ENCODE measurements at regions of chr3 and their contacts with region 1.

Region 1: GRCh38 chr3:129120254-129121004 is 1.2 kb downstream of the RAB43 start:
- DNase-seq: peak; percentile 96
- ATAC-seq: peak; percentile 69
- H3K4me3 Mint-ChIP-seq: peak overlapping the region; percentile 91
- H3K27ac Mint-ChIP-seq: peak overlapping the region; percentile 95
- H3K4me1 Mint-ChIP-seq: peaks cover 46% of the 10 kb centered on the region
- H3K27me3 Mint-ChIP-seq: no peaks in the 10 kb centered on the region

Region 2: DNA sequence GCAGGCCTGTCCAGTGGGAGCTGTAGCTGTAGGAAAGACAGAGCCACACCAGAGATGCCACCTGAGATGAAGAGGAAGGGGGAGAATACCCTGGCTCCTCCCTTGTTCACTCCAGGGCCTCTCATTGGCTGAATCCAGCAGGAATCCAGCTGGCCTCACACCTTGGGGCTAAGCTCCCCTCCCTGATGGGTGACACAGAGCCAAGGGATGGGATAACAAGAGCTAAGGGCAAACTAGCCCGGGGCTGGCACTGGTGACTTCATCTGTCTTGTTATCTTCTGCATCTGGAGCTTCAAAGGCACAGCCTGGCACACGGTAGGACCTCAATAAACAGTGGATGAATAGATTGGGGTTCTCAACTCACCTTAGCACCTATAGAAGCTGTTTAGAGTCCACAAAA is 613.7 kb before region 1 on chr3:
- CTCF ChIA-PET with region 1: no interaction called
- POLR2A ChIA-PET with region 1: no interaction called
- intact Hi-C with region 1: no loop called
- DNase-seq: no peak
- ATAC-seq: no peak
- H3K4me3 Mint-ChIP-seq: no peak overlapping the region
- H3K27ac Mint-ChIP-seq: no peak overlapping the region
- H3K4me1 Mint-ChIP-seq: no peaks in the 10 kb centered on the region
- H3K27me3 Mint-ChIP-seq: peaks cover 18% of the 10 kb centered on the region

Region 3: GRCh38 chr3:128794770-128795649 is 325.4 kb before region 1 on chr3:
- CTCF ChIA-PET with region 1: no interaction called
- POLR2A ChIA-PET with region 1: no interaction called
- intact Hi-C with region 1: loop called in 1 of 2 experiments (anchors 5 kb)
- DNase-seq: peak; percentile 76
- ATAC-seq: peak; percentile 68
- H3K4me3 Mint-ChIP-seq: peak overlapping the region; percentile 37
- H3K27ac Mint-ChIP-seq: peak overlapping the region; percentile 95
- H3K4me1 Mint-ChIP-seq: peaks cover 91% of the 10 kb centered on the region
- H3K27me3 Mint-ChIP-seq: no peaks in the 10 kb centered on the region

Region 4: DNA sequence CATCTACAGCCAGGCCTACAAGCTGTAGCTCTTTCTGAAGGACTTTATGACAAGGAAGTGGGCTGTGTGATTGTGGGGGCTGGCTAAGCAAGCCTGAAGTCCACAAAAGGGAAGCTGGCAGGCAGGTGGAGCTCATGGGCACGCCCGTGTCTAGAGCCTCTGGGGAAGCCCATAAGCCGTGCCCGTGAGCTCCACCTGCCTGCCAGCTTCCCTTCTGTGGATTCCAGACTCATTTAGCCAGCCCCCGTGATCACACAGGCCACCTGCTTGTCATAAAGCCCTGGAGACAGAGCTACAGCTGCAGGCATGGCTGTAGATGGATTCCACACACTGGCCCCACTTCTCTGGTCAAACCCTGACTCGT is 104.1 kb before region 1 on chr3:
- CTCF ChIA-PET with region 1: no interaction called
- POLR2A ChIA-PET with region 1: no interaction called
- intact Hi-C with region 1: no loop called
- DNase-seq: peak; percentile 80
- ATAC-seq: peak; percentile 84
- H3K4me3 Mint-ChIP-seq: peak overlapping the region; percentile 63
- H3K27ac Mint-ChIP-seq: peak overlapping the region; percentile 96
- H3K4me1 Mint-ChIP-seq: peaks cover 36% of the 10 kb centered on the region
- H3K27me3 Mint-ChIP-seq: no peaks in the 10 kb centered on the region

Region 5: GRCh38 chr3:129026728-129027543 is 93.5 kb before region 1 on chr3:
- CTCF ChIA-PET with region 1: interaction called, 5 read pairs
- POLR2A ChIA-PET with region 1: interaction called, 4 read pairs
- intact Hi-C with region 1: loop called in 1 of 2 experiments (anchors 1 kb)
- DNase-seq: peak; percentile 96
- ATAC-seq: peak; percentile 100
- H3K4me3 Mint-ChIP-seq: peak overlapping the region; percentile 72
- H3K27ac Mint-ChIP-seq: peak overlapping the region; percentile 81
- H3K4me1 Mint-ChIP-seq: peaks cover 12% of the 10 kb centered on the region
- H3K27me3 Mint-ChIP-seq: no peaks in the 10 kb centered on the region

Region 6: DNA sequence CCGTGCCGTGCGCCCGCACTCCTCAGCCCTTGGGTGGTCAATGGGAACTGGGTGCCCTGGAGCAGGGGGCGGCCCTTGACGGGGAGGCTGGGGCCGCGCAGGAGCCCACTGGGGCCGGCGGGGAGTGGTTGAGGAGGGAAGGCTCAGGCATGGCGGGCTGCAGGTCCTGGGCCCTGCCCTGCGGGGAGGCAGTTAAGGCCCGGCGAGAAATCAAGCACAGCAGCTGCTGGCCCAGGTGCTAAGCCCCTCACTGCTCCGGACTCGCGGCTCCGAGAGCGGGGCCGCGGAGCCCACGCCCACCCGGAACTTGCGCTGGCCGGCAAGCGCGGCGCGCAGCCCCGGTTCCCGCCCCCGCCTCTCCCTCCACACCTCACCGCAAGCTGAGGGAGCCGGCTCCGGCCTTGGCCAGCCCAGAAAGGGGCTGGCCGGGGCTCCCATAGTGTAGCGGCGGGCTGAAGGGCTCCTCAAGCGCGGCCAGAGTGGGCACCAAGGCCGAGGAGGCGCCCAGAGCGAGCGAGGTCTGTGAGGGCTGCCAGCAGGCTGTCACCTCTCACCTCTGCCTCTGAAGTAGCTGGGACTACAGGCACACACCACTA is 52.0 kb before region 1 on chr3:
- CTCF ChIA-PET with region 1: interaction called, 8 read pairs
- POLR2A ChIA-PET with region 1: interaction called, 3 read pairs
- intact Hi-C with region 1: loop called in 1 of 2 experiments (anchors 5 kb)
- DNase-seq: peak; percentile 31
- ATAC-seq: peak; percentile 47
- H3K4me3 Mint-ChIP-seq: peak overlapping the region; percentile 38
- H3K27ac Mint-ChIP-seq: no peak overlapping the region
- H3K4me1 Mint-ChIP-seq: peaks cover 9% of the 10 kb centered on the region
- H3K27me3 Mint-ChIP-seq: peaks cover 2% of the 10 kb centered on the region

Region 7: DNA sequence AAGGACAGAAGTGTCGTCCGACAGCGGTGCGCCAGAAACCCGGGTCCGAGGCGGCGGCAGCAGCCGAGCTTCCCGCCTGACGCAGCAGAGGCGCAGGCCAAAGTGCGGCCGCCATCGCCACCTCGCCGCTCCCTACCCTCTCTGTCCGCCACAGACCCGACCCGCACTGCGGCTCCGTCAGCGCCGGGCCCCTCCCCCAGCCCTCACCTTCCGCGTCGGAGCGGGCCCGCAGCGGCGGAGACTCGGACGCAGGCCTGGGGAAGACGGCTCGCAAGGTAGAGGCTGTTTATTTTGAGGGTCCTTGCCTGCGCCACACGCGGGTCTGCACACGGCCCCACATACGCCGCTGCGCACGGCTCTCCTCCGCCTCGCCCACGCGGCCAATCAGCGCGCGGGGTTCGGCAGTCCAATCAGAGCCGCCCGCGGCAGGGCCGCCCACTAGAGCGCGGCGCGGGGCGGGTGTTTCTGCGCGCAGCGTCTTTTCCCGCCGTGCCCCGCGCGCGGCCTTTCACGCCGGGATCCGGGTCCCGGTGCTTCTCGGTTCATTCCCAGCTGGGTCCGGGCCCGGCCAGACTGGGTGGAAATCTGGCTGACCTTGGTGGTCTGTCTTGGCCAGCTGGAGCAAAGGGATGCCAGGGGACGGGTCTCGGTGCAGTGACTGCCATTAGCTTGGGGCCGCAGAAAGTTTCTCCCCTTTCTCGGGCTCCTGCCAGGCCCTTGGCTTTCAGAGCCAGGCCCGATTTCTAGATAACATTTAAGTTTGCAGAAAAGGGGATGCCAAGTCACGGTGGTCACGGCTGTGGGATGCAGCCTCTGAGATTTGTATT is 63.4 kb after region 1 on chr3 and contains the start of gene CNBP:
- CTCF ChIA-PET with region 1: no interaction called
- POLR2A ChIA-PET with region 1: interaction called, 4 read pairs
- intact Hi-C with region 1: loop called (anchors 1 kb)
- DNase-seq: peak; percentile 96
- ATAC-seq: peak; percentile 95
- H3K4me3 Mint-ChIP-seq: peak within 1 kb of the TSS; percentile 96
- H3K27ac Mint-ChIP-seq: peak within 1 kb of the TSS; percentile 99
- H3K4me1 Mint-ChIP-seq: peaks cover 29% of the 10 kb centered on the region
- H3K27me3 Mint-ChIP-seq: no peaks in the 10 kb centered on the region
- total RNA-seq, gene CNBP: 305 to 379 TPM

Region 8: GRCh38 chr3:129289201-129289921 is 168.9 kb after region 1 on chr3:
- CTCF ChIA-PET with region 1: no interaction called
- POLR2A ChIA-PET with region 1: no interaction called
- intact Hi-C with region 1: no loop called
- DNase-seq: no peak
- ATAC-seq: peak; percentile 71
- H3K4me3 Mint-ChIP-seq: no peak overlapping the region
- H3K27ac Mint-ChIP-seq: peak overlapping the region; percentile 17
- H3K4me1 Mint-ChIP-seq: peaks cover 9% of the 10 kb centered on the region
- H3K27me3 Mint-ChIP-seq: no peaks in the 10 kb centered on the region

Region 9: GRCh38 chr3:129316131-129317013 is 195.9 kb after region 1 on chr3:
- CTCF ChIA-PET with region 1: no interaction called
- POLR2A ChIA-PET with region 1: interaction called, 10 read pairs
- intact Hi-C with region 1: loop called (anchors 2 to 5 kb)
- DNase-seq: peak; percentile 93
- ATAC-seq: peak; percentile 39
- H3K4me3 Mint-ChIP-seq: peak overlapping the region; percentile 88
- H3K27ac Mint-ChIP-seq: peak overlapping the region; percentile 58
- H3K4me1 Mint-ChIP-seq: peaks cover 22% of the 10 kb centered on the region
- H3K27me3 Mint-ChIP-seq: no peaks in the 10 kb centered on the region

Region 10: GRCh38 chr3:129650256-129650872 is 529.9 kb after region 1 on chr3:
- CTCF ChIA-PET with region 1: no interaction called
- POLR2A ChIA-PET with region 1: no interaction called
- intact Hi-C with region 1: no loop called
- DNase-seq: peak; percentile 77
- ATAC-seq: peak; percentile 68
- H3K4me3 Mint-ChIP-seq: no peak overlapping the region
- H3K27ac Mint-ChIP-seq: no peak overlapping the region
- H3K4me1 Mint-ChIP-seq: peaks cover 2% of the 10 kb centered on the region
- H3K27me3 Mint-ChIP-seq: no peaks in the 10 kb centered on the region